Head of caudate nucleus (tissue), 42 donors: ENCODE measurements at regions of chr19 and their contacts with region 1.

Region 1: GRCh38 chr19:11558881-11559828 is at the start of gene ELOF1:
- DNase-seq: peak; percentile 95 to 99 (median 98)

Region 2: DNA sequence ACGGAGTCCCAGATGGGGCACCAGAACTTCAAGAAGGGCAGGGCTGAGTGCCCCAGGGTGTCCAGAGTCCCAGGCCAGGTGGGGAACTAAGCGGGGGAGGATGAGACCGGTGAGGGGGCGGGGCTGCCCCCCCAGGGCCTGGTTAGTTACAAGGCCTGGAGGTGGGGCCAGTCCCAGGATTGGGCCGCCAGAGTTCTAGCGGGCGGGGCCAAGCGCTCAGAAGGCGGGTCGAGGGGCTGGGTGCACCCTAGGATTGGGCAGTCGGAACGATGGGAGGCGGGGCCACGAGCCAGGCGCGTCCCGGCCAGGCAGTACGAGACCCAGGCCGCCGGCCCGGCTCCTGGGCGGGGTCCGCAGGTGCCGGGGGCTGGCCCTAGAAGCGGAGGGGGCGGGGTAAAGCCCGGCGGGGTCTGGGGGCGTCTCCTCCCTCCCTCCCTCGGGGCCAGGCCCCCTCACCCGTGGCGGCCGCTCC is 54.1 kb before region 1 on chr19:
- intact Hi-C with region 1: loop called (anchors 5 kb)
- DNase-seq: peak; percentile 91 to 99 (median 97)